Posterior cingulate gyrus (tissue), 11 donors: ENCODE measurements at regions of chr16 and their contacts with region 1.

Region 1: GRCh38 chr16:69339289-69340108 is at the starts of genes COG8 and NIP7:
- DNase-seq: peak; percentile 92 to 99 (median 96)

Region 2: GRCh38 chr16:69310653-69311532 is 28.6 kb before region 1 on chr16 and contains the start of gene VPS4A:
- intact Hi-C with region 1: loop called (anchors 1 kb)
- DNase-seq: peak; percentile 92 to 99 (median 96)

Region 3: DNA sequence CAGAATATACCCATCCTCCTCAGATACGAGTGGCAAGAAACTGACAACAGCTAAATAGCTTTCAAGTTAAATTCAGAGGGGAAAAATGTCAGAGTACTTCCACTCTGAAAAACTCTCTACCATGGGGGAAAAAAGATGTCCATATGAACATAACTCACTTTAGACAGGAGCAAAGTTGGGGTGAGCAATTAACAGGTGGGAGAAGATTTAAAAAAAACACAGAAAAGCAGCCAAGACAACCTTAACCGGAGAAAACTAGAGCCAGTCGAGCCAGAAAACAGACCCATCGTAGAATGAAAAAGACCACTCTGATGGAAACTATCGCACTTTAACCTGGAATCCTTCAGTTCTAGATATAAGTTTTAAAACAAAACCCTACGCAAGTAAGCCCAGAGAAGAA is 45.5 kb after region 1 on chr16:
- intact Hi-C with region 1: loop called (anchors 1 kb)
- DNase-seq: no peak

Region 4: GRCh38 chr16:69435977-69436820 is 96.7 kb after region 1 on chr16:
- intact Hi-C with region 1: no loop called
- DNase-seq: no peak